ENCODE measurements at regions of chr20 and their contacts with region 1.

Region 1: GRCh38 chr20:35954200-35954906 is at the start of gene SCAND1:
- DNase-seq: peak; percentile 99
- ATAC-seq: peak; percentile 87
- H3K4me3 ChIP-seq: peak within 1 kb of the TSS; percentile 72 to 96 (median 91)
- H3K4me3 Mint-ChIP-seq: peak within 1 kb of the TSS; percentile 100
- H3K27ac ChIP-seq: peak within 1 kb of the TSS; percentile 98 to 99
- H3K27ac Mint-ChIP-seq: peak within 1 kb of the TSS; percentile 100
- H3K4me1 ChIP-seq: peaks cover 17 to 24% of the 10 kb centered on the region in 2 donors
- H3K4me1 Mint-ChIP-seq: peaks cover 22% of the 10 kb centered on the region
- H3K27me3 ChIP-seq: no peaks in the 10 kb centered on the region
- H3K27me3 Mint-ChIP-seq: no peaks in the 10 kb centered on the region
- CTCF ChIP-seq: peak; percentile 97
- total RNA-seq, gene SCAND1: 40.8 and 42.0 TPM in 2 replicates

Region 2: GRCh38 chr20:35284267-35284991 is 669.9 kb before region 1 on chr20 and contains the start of gene EIF6:
- CTCF ChIA-PET with region 1: no interaction called
- POLR2A ChIA-PET with region 1: interaction called, 4 read pairs
- intact Hi-C with region 1: loop called (anchors 5 kb)
- DNase-seq: peak; percentile 83
- ATAC-seq: peak; percentile 92
- H3K4me3 ChIP-seq: peak within 1 kb of the TSS; percentile 59 to 97 (median 93)
- H3K4me3 Mint-ChIP-seq: peak within 1 kb of the TSS; percentile 95
- H3K27ac ChIP-seq: peak within 1 kb of the TSS; percentile 71 to 90
- H3K27ac Mint-ChIP-seq: peak within 1 kb of the TSS; percentile 96
- H3K4me1 ChIP-seq: peaks cover 13 to 19% of the 10 kb centered on the region in 2 donors
- H3K4me1 Mint-ChIP-seq: peaks cover 32% of the 10 kb centered on the region
- H3K27me3 ChIP-seq: no peaks in the 10 kb centered on the region
- H3K27me3 Mint-ChIP-seq: no peaks in the 10 kb centered on the region
- CTCF ChIP-seq: no peak
- total RNA-seq, gene EIF6: 74.0 and 81.2 TPM in 2 replicates

Region 3: GRCh38 chr20:35541783-35542588 is 412.4 kb before region 1 on chr20 and contains the start of gene ERGIC3:
- CTCF ChIA-PET with region 1: interaction called, 4 read pairs
- POLR2A ChIA-PET with region 1: no interaction called
- intact Hi-C with region 1: loop called (anchors 5 kb)
- DNase-seq: peak; percentile 98
- ATAC-seq: peak; percentile 93
- H3K4me3 ChIP-seq: peak within 1 kb of the TSS; percentile 55 to 94 (median 87)
- H3K4me3 Mint-ChIP-seq: peak within 1 kb of the TSS; percentile 94
- H3K27ac ChIP-seq: peak within 1 kb of the TSS; percentile 63 to 82
- H3K27ac Mint-ChIP-seq: peak within 1 kb of the TSS; percentile 94
- H3K4me1 ChIP-seq: peaks cover 9 to 18% of the 10 kb centered on the region in 2 donors
- H3K4me1 Mint-ChIP-seq: peaks cover 26% of the 10 kb centered on the region
- H3K27me3 ChIP-seq: no peaks in the 10 kb centered on the region
- H3K27me3 Mint-ChIP-seq: no peaks in the 10 kb centered on the region
- CTCF ChIP-seq: no peak
- total RNA-seq, gene ERGIC3: 167 and 191 TPM in 2 replicates

Region 4: DNA sequence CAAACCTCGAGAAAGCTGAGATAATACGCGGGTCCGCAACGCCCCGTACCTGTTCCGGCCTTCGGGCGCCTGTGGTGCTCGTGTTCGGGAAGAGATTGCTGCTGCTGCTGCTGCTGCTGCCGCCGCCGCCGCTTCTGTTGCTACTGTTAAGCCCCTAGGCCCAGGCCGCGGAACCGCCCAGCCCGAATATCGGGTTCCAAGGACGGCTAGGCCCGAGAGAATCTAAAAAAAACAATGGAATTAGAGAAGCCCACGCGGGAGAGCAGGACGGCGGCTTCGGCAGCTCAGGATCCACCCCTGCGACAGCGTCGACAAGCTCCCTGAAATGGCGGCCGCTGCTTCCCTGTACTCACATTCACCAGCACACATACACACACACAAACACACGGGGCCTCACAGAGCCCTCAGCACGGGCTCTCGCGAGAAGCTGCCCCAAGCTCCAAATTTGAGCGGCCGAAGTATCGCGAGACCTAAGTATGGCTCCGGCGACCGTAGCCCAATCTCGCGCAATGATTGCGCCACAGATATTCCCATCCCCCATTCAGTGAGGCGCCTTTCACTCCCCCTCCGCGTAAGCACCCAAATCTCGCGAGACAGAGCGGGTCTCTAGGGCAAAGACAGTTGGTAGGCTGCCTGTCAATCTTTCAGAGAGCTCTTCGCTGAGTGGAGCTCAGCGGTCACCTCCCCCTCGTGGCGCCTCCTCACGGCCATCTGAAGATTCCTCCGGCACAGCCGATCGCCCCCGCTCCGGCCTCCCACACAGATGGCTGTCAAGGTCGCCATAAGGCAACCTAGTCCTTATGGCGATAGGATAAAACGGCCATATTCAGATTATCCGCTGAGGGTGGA is 212.2 kb before region 1 on chr20 and contains the start of gene RBM39:
- CTCF ChIA-PET with region 1: interaction called, 12 read pairs
- POLR2A ChIA-PET with region 1: interaction called, 20 read pairs
- intact Hi-C with region 1: no loop called
- DNase-seq: peak; percentile 100
- ATAC-seq: peak; percentile 83
- H3K4me3 ChIP-seq: peak within 1 kb of the TSS; percentile 95 to 99 (median 99)
- H3K4me3 Mint-ChIP-seq: peak within 1 kb of the TSS; percentile 95
- H3K27ac ChIP-seq: peak within 1 kb of the TSS; percentile 100
- H3K27ac Mint-ChIP-seq: peak within 1 kb of the TSS; percentile 100
- H3K4me1 ChIP-seq: peaks cover 38 to 42% of the 10 kb centered on the region in 2 donors
- H3K4me1 Mint-ChIP-seq: peaks cover 46% of the 10 kb centered on the region
- H3K27me3 ChIP-seq: no peaks in the 10 kb centered on the region
- H3K27me3 Mint-ChIP-seq: no peaks in the 10 kb centered on the region
- CTCF ChIP-seq: peak; percentile 57
- total RNA-seq, gene RBM39: 689 and 698 TPM in 2 replicates

Region 5: GRCh38 chr20:35994994-35995453 is 40.7 kb after region 1 on chr20:
- CTCF ChIA-PET with region 1: interaction called, 31 read pairs
- POLR2A ChIA-PET with region 1: interaction called, 7 read pairs
- intact Hi-C with region 1: no loop called
- DNase-seq: peak; percentile 85
- ATAC-seq: peak; percentile 85
- H3K4me3 ChIP-seq: no peak overlapping the region
- H3K4me3 Mint-ChIP-seq: no peak overlapping the region
- H3K27ac ChIP-seq: no peak overlapping the region
- H3K27ac Mint-ChIP-seq: peak overlapping the region; percentile 69
- H3K4me1 ChIP-seq: peaks cover 4% of the 10 kb centered on the region in 2 donors
- H3K4me1 Mint-ChIP-seq: peaks cover 9% of the 10 kb centered on the region
- H3K27me3 ChIP-seq: peaks cover 0 to 5% (median 1%) of the 10 kb centered on the region in 4 experiments
- H3K27me3 Mint-ChIP-seq: peaks cover 6% of the 10 kb centered on the region
- CTCF ChIP-seq: peak; percentile 89

Region 6: DNA sequence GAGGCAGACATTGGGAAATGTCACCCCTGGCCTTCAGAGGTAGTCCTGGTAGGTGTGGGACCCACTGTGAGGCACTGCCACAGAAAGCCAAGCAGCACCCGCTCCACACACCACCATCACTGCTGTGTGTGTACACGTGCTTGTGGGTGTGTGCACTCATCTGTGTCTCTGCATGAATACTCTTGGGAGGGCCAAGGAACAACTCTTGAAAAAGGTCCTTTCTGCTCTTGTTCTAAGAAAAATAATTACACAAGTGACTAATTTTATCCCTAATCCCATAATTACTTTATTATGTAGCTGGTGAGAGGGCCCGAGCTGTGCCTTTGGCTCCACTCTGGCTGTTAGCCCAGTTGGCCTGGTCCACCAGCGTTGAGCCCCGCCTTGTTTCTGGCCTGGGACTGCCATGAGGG is 178.5 kb after region 1 on chr20:
- CTCF ChIA-PET with region 1: interaction called, 3 read pairs
- POLR2A ChIA-PET with region 1: no interaction called
- intact Hi-C with region 1: loop called (anchors 1 kb)
- DNase-seq: peak; percentile 42
- ATAC-seq: peak; percentile 94
- H3K4me3 ChIP-seq: no peak overlapping the region
- H3K4me3 Mint-ChIP-seq: no peak overlapping the region
- H3K27ac ChIP-seq: no peak overlapping the region
- H3K27ac Mint-ChIP-seq: no peak overlapping the region
- H3K4me1 ChIP-seq: peaks cover 9 to 12% of the 10 kb centered on the region in 2 donors
- H3K4me1 Mint-ChIP-seq: peaks cover 14% of the 10 kb centered on the region
- H3K27me3 ChIP-seq: no peaks in the 10 kb centered on the region
- H3K27me3 Mint-ChIP-seq: peaks cover 6% of the 10 kb centered on the region
- CTCF ChIP-seq: no peak

Region 7: GRCh38 chr20:37095599-37096414 is 1141.5 kb after region 1 on chr20 and contains the start of gene RBL1:
- CTCF ChIA-PET with region 1: no interaction called
- POLR2A ChIA-PET with region 1: no interaction called
- intact Hi-C with region 1: loop called (anchors 5 kb)
- DNase-seq: peak; percentile 96
- ATAC-seq: peak; percentile 86
- H3K4me3 ChIP-seq: peak within 1 kb of the TSS; percentile 62 to 77 (median 73)
- H3K4me3 Mint-ChIP-seq: peak within 1 kb of the TSS; percentile 98
- H3K27ac ChIP-seq: peak within 1 kb of the TSS; percentile 88 to 95
- H3K27ac Mint-ChIP-seq: peak within 1 kb of the TSS; percentile 100
- H3K4me1 ChIP-seq: peaks cover 13 to 28% of the 10 kb centered on the region in 2 donors
- H3K4me1 Mint-ChIP-seq: peaks cover 29% of the 10 kb centered on the region
- H3K27me3 ChIP-seq: no peaks in the 10 kb centered on the region
- H3K27me3 Mint-ChIP-seq: no peaks in the 10 kb centered on the region
- CTCF ChIP-seq: peak; percentile 13
- total RNA-seq, gene RBL1: 25.5 and 27.8 TPM in 2 replicates